Activated naive CD4-positive, alpha-beta T cell treated with anti-CD3 and anti-CD28 coated beads for 36 hours (primary cell): ENCODE measurements at regions of chr13 and their contacts with region 1.

Region 1: GRCh38 chr13:46831588-46832194 is 34.7 kb upstream of the ESD start:
- DNase-seq: peak; percentile 63
- H3K4me3 Mint-ChIP-seq: no peak overlapping the region
- H3K27ac Mint-ChIP-seq: no peak overlapping the region
- H3K4me1 Mint-ChIP-seq: no peaks in the 10 kb centered on the region
- H3K27me3 Mint-ChIP-seq: no peaks in the 10 kb centered on the region

Region 2: DNA sequence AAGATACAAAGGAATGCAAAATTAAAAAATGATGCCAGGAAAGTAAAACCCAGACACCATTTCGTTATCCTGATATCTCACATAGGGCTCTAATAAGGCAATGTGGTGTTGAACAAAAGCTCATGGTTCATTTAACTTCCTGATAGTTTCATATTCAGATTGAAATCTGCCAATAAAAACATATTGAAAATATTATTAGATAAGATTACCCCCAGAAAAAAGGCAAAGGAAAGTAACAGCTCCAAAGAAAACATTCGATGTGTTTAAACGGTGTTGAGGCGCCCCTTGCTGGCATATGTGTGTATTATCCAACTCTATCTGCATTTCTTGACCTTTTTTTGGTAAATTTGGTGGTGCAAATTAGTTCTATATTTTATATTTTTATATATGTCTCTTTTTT is 110.6 kb before region 1 on chr13:
- CTCF ChIA-PET with region 1: no interaction called
- intact Hi-C with region 1: no loop called
- DNase-seq: peak; percentile 67
- H3K4me3 Mint-ChIP-seq: no peak overlapping the region
- H3K27ac Mint-ChIP-seq: no peak overlapping the region
- H3K4me1 Mint-ChIP-seq: no peaks in the 10 kb centered on the region
- H3K27me3 Mint-ChIP-seq: no peaks in the 10 kb centered on the region

Region 3: GRCh38 chr13:46778890-46779289 is 52.8 kb before region 1 on chr13:
- CTCF ChIA-PET with region 1: no interaction called
- intact Hi-C with region 1: no loop called
- DNase-seq: no peak
- H3K4me3 Mint-ChIP-seq: no peak overlapping the region
- H3K27ac Mint-ChIP-seq: no peak overlapping the region
- H3K4me1 Mint-ChIP-seq: peaks cover 1% of the 10 kb centered on the region
- H3K27me3 Mint-ChIP-seq: no peaks in the 10 kb centered on the region

Region 4: GRCh38 chr13:46893798-46894560 is 62.3 kb after region 1 on chr13:
- CTCF ChIA-PET with region 1: interaction called, 3 read pairs
- intact Hi-C with region 1: loop called (anchors 1 kb)
- DNase-seq: peak; percentile 66
- H3K4me3 Mint-ChIP-seq: peak overlapping the region; percentile 53
- H3K27ac Mint-ChIP-seq: no peak overlapping the region
- H3K4me1 Mint-ChIP-seq: peaks cover 12% of the 10 kb centered on the region
- H3K27me3 Mint-ChIP-seq: peaks cover 55% of the 10 kb centered on the region

Region 5: DNA sequence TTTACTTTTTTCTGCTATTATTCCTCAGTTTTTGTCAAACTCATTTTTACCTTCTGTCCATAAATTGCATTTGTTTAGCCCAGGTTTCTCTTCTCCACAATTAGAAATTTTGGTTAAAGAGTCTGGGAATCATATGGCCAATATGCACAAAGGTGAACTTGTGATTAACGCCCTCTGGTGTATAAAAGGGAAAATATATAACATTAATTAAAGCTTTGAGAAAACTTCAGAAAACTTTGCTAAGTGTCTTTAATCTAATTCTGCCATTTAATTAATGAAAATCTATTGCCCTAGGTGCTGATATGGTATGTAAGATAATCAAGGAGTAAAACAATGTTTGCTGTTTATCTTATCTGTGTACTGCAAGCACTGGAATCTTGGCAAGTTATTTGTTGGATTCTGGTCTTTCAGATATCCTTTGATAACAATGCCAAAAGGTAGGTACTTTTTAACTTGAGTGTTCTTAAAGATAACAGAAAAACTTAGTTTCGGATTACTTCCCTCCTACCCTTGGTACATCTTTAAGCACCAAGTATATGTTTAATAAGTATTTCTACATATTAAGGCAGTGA is 766.7 kb after region 1 on chr13:
- CTCF ChIA-PET with region 1: no interaction called
- intact Hi-C with region 1: loop called (anchors 1 kb)
- DNase-seq: no peak
- H3K4me3 Mint-ChIP-seq: no peak overlapping the region
- H3K27ac Mint-ChIP-seq: no peak overlapping the region
- H3K4me1 Mint-ChIP-seq: no peaks in the 10 kb centered on the region
- H3K27me3 Mint-ChIP-seq: peaks cover 3% of the 10 kb centered on the region